WTC11 (cell line): ENCODE measurements at regions of chr2 and their contacts with region 1.

Region 1: DNA sequence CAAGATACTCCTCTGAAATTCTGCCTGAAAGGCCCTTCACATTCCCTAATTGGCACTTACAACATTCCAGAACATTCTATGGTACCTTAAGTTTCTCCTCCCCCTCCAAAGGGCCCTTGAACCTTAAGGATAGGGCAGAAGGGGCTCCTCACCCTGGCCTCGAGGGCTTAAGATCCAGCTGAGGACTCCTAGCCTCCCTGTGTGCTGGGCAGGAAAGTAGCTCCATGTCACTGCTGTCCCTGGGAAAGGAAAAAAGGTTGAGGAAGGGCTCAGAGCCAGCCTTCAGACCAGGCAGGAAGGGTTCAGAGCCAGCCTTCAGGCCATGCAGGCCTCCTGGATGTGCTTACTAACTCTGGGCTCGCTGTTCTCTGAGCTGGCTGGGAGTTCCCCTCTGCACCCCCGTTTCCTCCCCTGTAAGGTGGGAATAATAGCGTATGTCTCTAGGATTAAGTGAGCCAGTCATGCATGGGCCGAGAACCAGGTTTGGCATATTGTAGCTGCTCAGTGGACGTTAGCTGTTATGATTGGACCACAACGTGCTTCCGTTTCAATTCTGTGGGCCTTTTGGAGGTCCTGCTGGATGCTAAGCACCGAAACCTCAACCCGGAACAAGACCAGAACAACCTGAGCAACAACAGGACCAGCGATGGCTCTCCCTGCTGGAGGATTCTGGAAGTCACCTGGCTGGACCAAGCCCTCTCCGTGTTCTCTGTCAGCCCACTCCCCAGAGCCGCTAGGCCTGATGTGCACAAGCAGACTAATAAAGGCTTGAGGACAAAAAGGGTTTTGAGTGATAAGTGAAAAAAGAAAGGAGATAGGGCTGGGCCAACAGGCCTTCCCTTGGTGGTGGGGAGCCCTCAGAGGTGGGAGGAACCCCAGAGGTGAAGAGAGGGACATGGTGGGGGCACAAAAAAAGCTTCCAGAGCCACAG is 1.0 kb upstream of the B3GNT7 start:
- DNase-seq: peak; percentile 76
- ATAC-seq: peak; percentile 70
- H3K4me3 Mint-ChIP-seq: peak overlapping the region; percentile 70
- H3K27ac Mint-ChIP-seq: peak overlapping the region; percentile 91
- H3K4me1 Mint-ChIP-seq: peaks cover 58% of the 10 kb centered on the region
- H3K27me3 Mint-ChIP-seq: no peaks in the 10 kb centered on the region
- CTCF ChIP-seq: no peak

Region 2: DNA sequence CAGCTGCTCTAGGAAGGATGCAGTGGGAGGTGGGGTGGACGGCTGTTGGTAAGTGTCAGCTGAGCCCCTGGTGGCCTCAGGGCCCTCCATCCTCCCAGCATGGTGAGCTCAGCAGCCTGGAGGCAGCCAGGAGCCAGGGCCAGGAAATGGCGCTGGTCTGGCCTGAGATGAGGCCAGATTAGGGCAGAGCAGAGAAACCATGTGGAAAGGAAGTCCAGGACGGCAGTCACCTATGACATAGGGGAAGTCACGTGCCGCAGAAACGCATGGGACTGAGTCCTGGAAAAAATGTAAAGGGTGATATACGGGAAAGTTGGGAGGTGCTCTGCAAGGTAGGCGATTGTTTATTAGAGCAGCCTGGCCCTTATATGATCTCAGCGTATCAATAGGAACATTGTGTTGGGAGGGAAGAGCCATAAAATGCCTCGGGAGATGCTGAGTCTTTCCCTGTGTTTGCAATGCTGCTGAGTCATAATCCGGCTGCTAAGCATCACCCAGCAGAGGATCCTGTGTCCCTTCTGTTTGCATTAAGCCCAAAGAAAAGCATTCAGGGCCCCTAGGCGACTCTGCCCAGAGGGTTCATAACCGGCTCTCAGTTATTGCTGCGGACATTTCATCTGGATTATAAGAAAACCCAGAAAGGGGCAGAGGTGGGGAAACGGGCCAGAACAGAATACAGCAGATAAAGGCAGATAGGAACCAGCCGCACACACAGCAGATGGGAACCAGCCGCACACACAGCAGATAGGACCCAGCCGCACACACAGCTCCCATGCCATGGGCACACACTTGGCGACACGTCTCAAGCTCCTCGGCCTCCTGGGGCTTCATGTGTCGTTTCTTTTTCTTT is 29.3 kb before region 1 on chr2:
- CTCF ChIA-PET with region 1: interaction called, 33 read pairs
- POLR2A ChIA-PET with region 1: no interaction called
- DNase-seq: no peak
- ATAC-seq: peak; percentile 25
- H3K4me3 Mint-ChIP-seq: no peak overlapping the region
- H3K27ac Mint-ChIP-seq: peak overlapping the region; percentile 74
- H3K4me1 Mint-ChIP-seq: peaks cover 58% of the 10 kb centered on the region
- H3K27me3 Mint-ChIP-seq: no peaks in the 10 kb centered on the region
- CTCF ChIP-seq: no peak

Region 3: DNA sequence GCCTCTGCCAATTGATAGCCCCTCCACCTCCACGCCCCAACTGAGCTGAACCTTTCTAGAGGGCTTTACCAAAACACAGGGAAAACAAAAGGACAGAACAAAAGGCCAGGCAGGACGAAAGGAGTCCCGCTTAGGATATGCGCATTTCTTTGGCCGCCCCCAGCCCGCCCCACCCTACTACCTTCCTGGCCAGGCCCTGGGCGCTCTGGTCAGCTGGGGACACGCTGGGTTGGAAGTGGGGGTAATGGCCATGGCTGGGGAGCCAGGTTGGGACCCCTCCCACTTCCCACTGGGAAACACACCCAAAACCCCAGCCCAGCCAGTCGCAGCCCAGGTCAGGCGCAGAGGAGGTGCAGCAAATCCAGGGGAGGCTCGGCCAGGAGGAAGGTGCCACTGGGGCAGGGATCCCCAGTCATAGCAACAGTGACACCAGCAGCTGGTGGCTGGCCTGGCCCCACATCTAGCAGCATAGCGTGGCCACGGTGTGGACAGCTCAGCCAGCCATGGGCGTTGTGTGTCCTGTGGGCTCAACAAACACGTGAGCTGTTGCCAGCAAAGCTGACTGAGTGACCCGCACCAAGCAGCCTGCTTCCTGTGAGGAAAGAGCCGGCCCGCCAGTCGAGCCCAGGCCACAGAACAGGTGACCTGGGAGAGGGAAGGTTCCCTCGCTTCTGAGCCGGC is 23.6 kb before region 1 on chr2:
- CTCF ChIA-PET with region 1: interaction called, 33 read pairs
- POLR2A ChIA-PET with region 1: no interaction called
- DNase-seq: peak; percentile 66
- ATAC-seq: peak; percentile 71
- H3K4me3 Mint-ChIP-seq: peak overlapping the region; percentile 36; the same call in 1 of the 2 replicates
- H3K27ac Mint-ChIP-seq: peak overlapping the region; percentile 98
- H3K4me1 Mint-ChIP-seq: peaks cover 73% of the 10 kb centered on the region
- H3K27me3 Mint-ChIP-seq: no peaks in the 10 kb centered on the region
- CTCF ChIP-seq: no peak

Region 4: DNA sequence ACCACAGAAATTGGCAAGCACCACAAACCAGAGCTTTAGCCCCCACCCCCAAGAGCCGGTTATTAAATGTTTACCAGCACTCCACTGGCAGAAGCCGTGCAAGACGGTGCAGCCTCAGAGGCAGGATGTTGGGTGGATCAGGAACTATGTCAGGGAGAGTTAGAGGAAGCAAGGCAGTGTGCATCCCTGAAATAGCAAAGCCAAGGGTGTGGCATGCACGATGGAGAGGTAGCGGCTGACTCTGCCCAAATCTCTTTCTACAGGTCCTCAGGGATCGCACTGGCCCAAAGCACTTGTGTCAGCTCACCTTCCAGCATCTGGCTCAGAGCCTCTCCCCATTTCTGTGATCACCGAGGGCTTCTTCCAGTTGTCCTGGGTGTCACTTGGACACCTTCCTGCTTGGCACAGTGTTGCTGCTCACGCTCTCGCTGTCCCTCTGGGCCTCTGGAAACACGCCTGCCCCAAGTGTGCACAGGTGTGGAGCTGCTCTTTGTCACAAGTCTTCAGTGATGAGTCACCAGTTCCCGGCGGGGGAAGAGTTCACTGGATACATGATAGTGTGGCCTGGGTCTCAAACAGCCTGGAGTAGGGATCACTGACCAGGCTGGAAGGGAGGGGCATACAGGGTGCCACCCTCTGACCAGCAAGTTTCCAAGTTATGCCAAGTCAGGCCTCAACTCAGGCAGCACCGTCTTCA is 16.3 kb before region 1 on chr2:
- CTCF ChIA-PET with region 1: interaction called, 16 read pairs
- POLR2A ChIA-PET with region 1: interaction called, 3 read pairs
- DNase-seq: no peak
- ATAC-seq: no peak
- H3K4me3 Mint-ChIP-seq: no peak overlapping the region
- H3K27ac Mint-ChIP-seq: peak overlapping the region; percentile 82
- H3K4me1 Mint-ChIP-seq: peaks cover 54% of the 10 kb centered on the region
- H3K27me3 Mint-ChIP-seq: no peaks in the 10 kb centered on the region; the same call in 1 of the 2 replicates
- CTCF ChIP-seq: no peak

Region 5: DNA sequence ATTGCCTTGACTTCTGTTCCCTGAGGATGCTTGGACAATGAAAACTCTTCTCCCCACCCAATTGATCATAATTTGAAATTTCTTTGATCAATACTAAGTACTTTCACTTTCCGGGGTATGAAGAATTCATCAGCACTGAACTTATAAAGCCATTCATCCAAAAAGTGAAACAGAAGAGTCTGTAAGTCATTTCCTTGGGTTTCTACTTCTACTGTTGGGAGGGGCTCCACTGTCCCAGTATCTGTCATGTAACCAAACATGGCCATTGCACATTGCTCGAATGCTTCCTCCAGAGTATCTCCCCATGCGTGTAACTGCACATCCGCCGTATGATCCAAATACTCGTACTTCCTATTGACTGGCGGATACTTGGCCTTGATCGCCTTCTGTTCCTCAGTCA is 39.5 kb after region 1 on chr2:
- CTCF ChIA-PET with region 1: no interaction called
- POLR2A ChIA-PET with region 1: no interaction called
- DNase-seq: no peak
- ATAC-seq: no peak
- H3K4me3 Mint-ChIP-seq: no peak overlapping the region
- H3K27ac Mint-ChIP-seq: no peak overlapping the region
- H3K4me1 Mint-ChIP-seq: peaks cover 6% of the 10 kb centered on the region
- H3K27me3 Mint-ChIP-seq: no peaks in the 10 kb centered on the region; the same call in none of the 2 replicates
- CTCF ChIP-seq: no peak